Esophagus muscularis mucosa (tissue), 4 donors: ENCODE measurements at regions of chr1 and their contacts with region 1.

Region 1: DNA sequence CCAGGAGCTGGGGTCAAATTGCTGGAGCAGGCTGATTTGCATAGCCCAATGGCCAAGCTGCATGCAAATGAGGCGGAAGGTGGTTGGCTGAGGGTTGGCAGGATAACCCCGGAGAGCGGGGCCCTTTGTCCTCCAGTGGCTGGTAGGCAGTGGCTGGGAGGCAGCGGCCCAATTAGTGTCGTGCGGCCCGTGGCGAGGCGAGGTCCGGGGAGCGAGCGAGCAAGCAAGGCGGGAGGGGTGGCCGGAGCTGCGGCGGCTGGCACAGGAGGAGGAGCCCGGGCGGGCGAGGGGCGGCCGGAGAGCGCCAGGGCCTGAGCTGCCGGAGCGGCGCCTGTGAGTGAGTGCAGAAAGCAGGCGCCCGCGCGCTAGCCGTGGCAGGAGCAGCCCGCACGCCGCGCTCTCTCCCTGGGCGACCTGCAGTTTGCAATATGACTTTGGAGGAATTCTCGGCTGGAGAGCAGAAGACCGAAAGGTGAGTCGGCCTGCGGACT is at the start of gene GADD45A:
- DNase-seq: peak; percentile 100
- H3K4me3 ChIP-seq: peak within 1 kb of the TSS; percentile 82 to 95 (median 90)
- H3K27ac ChIP-seq: peak within 1 kb of the TSS; percentile 93 to 98 (median 96)
- H3K4me1 ChIP-seq: peaks cover 23 to 37% (median 35%) of the 10 kb centered on the region in 4 donors
- H3K27me3 ChIP-seq: no peaks in the 10 kb centered on the region
- CTCF ChIP-seq: peak in 1 of 3 experiments; percentile 1
- EP300 ChIP-seq: no peak
- POLR2A ChIP-seq: peak; percentile 91
- total RNA-seq, gene GADD45A: 51.1 to 80.8 (median 66.5) TPM

Region 2: DNA sequence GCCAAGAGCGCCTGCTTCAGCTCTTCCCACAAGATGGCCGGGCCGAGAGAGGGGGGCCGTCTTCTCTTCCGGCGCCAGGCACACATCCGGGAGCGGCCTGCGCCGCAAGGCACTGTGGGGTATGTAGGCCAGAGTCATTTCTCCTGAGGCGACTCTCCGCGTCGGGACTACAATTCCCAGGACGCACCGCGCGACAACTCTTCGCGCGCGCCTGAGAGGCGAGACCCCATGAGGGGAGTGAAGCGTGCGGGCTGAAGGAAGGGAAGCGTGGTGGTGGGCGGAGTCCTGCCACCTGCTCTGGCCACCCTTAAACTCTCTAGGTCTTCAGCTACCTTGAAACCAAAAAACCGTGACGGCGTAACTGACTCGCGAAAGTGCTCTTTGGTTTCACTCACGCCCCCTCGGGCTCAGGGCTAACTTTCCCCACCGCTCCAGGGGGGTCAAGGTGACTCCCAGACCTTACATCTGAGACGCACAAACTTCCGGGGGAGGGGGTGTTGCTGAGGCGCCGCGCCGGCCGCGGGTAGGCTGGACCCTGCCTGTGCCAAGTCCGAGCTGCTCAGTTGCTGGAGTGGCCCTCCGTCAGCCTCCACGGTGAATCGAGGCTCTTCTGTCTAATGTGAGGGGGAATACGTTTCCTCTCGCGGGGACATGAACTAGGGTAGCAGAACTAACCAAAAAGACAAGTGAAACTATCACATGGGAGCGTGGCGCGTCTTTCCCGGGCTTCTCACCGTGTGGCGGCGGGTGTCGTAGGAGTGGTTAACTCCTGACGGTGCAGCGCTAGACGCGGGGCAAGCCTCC is 254.6 kb before region 1 on chr1 and contains the start of gene SERBP1:
- intact Hi-C with region 1: loop called (anchors 10 kb)
- DNase-seq: peak; percentile 98
- H3K4me3 ChIP-seq: peak within 1 kb of the TSS; percentile 78 to 92 (median 80)
- H3K27ac ChIP-seq: peak within 1 kb of the TSS; percentile 92 to 96 (median 92)
- H3K4me1 ChIP-seq: peaks cover 32 to 63% (median 57%) of the 10 kb centered on the region in 4 donors
- H3K27me3 ChIP-seq: no peaks in the 10 kb centered on the region
- CTCF ChIP-seq: no peak
- EP300 ChIP-seq: no peak
- POLR2A ChIP-seq: no peak
- total RNA-seq, gene SERBP1: 203 to 254 (median 223) TPM

Region 3: DNA sequence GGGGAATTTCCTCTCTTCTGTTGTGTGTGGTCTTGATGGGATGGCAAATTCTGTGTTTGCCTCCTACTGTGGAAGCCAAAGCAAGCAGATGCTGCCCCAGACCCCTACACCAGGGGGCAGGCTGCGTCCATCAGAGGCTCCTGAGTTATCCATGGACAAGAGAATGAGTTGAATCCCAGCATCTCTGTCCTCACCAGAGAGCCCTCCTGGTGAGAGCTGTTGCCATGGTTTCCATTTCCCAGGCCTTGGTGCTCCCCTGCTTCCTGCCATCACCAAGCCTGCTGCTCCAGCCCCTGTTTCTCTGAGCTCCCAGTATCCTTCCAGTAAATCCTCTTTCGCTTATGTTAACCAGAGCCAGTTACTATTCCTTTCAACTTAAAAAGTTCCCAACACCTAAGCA is 168.6 kb after region 1 on chr1:
- intact Hi-C with region 1: loop called (anchors 10 kb)
- DNase-seq: no peak
- H3K4me3 ChIP-seq: no peak overlapping the region
- H3K27ac ChIP-seq: no peak overlapping the region
- H3K4me1 ChIP-seq: peaks cover 8 to 27% (median 17%) of the 10 kb centered on the region in 4 donors
- H3K27me3 ChIP-seq: no peaks in the 10 kb centered on the region
- CTCF ChIP-seq: peak; percentile 54 to 70 (median 56)
- EP300 ChIP-seq: no peak
- POLR2A ChIP-seq: no peak

Region 4: GRCh38 chr1:69221524-69221923 is 1536.4 kb after region 1 on chr1:
- intact Hi-C with region 1: no loop called
- DNase-seq: no peak
- H3K4me3 ChIP-seq: no peak overlapping the region
- H3K27ac ChIP-seq: no peak overlapping the region
- H3K4me1 ChIP-seq: no peaks in the 10 kb centered on the region
- H3K27me3 ChIP-seq: no peaks in the 10 kb centered on the region
- CTCF ChIP-seq: no peak
- EP300 ChIP-seq: no peak
- POLR2A ChIP-seq: no peak